Common myeloid progenitor, CD34-positive (primary cell): ENCODE measurements at regions of chr22 and their contacts with region 1.

Region 1: GRCh38 chr22:49046546-49047361 is 780.9 kb downstream of the BRD1 start:
- DNase-seq: peak; percentile 49 to 76 (median 71)
- H3K4me3 ChIP-seq: no peak overlapping the region
- H3K27ac ChIP-seq: no peak overlapping the region
- H3K4me1 ChIP-seq: no peaks in the 10 kb centered on the region
- H3K27me3 ChIP-seq: peaks cover 0 to 24% (median 4%) of the 10 kb centered on the region in 5 experiments

Region 2: DNA sequence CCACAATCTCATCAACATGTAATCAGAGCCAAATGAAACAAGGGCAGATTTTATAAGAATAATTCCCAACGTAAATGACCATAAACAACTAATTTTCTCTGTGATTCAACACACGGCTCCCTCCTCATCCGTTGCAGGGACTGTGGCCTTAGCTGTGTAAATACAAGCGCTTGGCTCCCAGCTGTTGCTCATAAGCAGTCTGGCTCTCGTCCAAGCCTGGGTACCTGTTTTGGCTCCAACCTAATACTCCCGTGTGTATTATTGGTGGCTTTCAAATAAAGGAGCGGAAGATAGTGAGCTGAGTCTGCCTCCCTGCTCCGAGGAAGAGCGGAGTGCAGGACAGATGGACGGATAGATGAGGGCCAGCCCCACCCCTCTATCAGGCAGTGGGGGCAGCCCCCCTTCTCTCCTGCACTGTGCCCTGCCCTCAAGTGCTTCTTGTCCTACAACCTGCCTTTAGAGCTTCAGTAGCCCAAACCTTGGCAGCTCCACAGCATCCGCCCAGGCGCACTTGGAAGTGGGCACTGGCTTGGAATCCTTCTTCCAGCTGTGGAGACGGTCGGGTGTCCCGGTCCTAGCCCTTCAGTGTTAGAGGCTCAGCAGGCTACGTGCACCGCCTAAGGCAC is 110.0 kb after region 1 on chr22:
- CTCF ChIA-PET with region 1: no interaction called
- POLR2A ChIA-PET with region 1: no interaction called
- DNase-seq: no peak
- H3K4me3 ChIP-seq: no peak overlapping the region
- H3K27ac ChIP-seq: no peak overlapping the region
- H3K4me1 ChIP-seq: no peaks in the 10 kb centered on the region
- H3K27me3 ChIP-seq: peaks cover 0 to 8% (median 0%) of the 10 kb centered on the region in 5 experiments

Region 3: DNA sequence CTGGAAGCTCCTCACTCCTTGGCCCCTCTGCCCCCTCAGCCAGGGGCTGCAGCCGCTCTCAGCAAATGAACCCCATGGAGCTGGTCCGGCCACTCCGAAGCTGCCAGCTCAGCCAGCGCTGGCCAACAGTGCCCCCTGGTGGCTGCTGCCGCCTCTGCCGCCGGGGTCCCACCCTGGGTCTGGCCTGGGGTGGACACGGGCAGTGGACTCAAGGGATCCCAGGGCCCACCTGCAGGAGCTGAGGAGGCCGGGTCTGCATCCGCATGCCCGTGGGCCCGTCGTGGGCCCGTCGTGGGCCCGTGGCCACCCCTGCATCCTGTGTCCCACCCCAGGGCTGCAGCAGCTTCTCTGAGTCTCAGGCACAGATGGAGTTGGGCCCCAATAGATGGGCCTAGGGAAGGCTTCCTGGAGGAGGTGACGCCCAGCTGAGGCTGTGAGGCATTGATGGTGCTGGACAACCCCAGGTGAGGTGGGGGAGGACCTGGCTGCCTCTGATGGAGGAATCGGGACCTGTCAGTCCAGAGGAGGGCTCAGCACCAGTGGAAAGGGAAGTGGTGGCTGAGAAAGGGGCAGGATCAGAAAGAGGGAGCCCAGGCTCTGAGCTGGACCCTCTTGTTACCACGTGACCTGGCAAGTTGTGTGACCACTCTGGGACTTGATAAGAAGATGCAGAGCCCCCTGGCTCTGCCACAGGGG is 258.6 kb after region 1 on chr22:
- CTCF ChIA-PET with region 1: interaction called, 11 read pairs
- POLR2A ChIA-PET with region 1: no interaction called
- DNase-seq: peak; percentile 29 to 53 (median 47)
- H3K4me3 ChIP-seq: no peak overlapping the region
- H3K27ac ChIP-seq: no peak overlapping the region
- H3K4me1 ChIP-seq: no peaks in the 10 kb centered on the region
- H3K27me3 ChIP-seq: peaks cover 0 to 27% (median 5%) of the 10 kb centered on the region in 5 experiments